ENCODE measurements at regions of chr10 and their contacts with region 1.

Region 1: GRCh38 chr10:59934701-59935100 is 28.3 kb upstream of the CCDC6 start:
- DNase-seq: no peak
- ATAC-seq: no peak
- H3K4me3 ChIP-seq: no peak overlapping the region
- H3K4me3 Mint-ChIP-seq: no peak overlapping the region
- H3K27ac ChIP-seq: no peak overlapping the region
- H3K27ac Mint-ChIP-seq: no peak overlapping the region
- H3K4me1 ChIP-seq: no peaks in the 10 kb centered on the region
- H3K4me1 Mint-ChIP-seq: no peaks in the 10 kb centered on the region
- H3K27me3 ChIP-seq: no peaks in the 10 kb centered on the region
- H3K27me3 Mint-ChIP-seq: peaks cover 7% of the 10 kb centered on the region in 2 donors

Region 2: DNA sequence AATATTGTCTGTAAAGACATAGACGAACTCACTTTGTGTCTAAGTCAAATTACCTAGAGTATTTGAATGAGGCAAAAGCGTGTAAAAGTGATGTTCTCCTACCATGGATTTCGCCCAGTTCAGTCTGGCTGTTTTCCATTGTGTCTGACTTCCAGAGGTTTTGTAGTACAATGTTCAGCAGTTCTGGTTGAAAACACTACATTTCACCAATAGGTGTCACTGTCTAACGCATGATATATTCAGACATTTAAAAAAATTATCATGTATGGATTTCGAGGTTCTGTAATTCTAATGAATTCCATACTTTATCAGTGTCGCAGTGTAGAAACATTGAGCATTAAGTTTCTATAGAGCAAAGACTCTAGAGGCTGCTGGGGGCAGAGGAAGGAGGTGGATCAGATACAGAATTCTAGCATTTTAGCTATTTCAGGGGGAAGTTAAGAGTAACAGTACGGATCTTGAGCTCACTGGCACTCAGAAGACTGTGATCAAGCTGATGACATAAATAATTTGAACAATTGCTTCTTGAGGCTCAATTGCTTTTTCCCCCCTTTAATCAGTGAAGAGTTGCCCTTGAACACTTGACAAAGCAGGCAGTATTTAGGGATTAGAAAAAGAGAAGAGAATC is 1206.2 kb after region 1 on chr10:
- CTCF ChIA-PET with region 1: interaction called in 1 of 2 experiments, 13 read pairs
- POLR2A ChIA-PET with region 1: no interaction called
- DNase-seq: peak in 1 of 35 experiments; percentile 39
- ATAC-seq: no peak
- H3K4me3 ChIP-seq: no peak overlapping the region
- H3K4me3 Mint-ChIP-seq: no peak overlapping the region
- H3K27ac ChIP-seq: no peak overlapping the region
- H3K27ac Mint-ChIP-seq: no peak overlapping the region
- H3K4me1 ChIP-seq: no peaks in the 10 kb centered on the region
- H3K4me1 Mint-ChIP-seq: no peaks in the 10 kb centered on the region
- H3K27me3 ChIP-seq: peaks cover 0 to 3% of the 10 kb centered on the region in 2 experiments
- H3K27me3 Mint-ChIP-seq: no peaks in the 10 kb centered on the region

Measured in T-cell (primary cell).